Ovary (tissue), 10 donors: ENCODE measurements at regions of chr1 and their contacts with region 1.

Region 1: GRCh38 chr1:229617351-229618098 is 8.4 kb downstream of the TAF5L start:
- DNase-seq: no peak
- H3K4me3 ChIP-seq: no peak overlapping the region
- H3K27ac ChIP-seq: no peak overlapping the region
- H3K4me1 ChIP-seq: no peaks in the 10 kb centered on the region
- H3K27me3 ChIP-seq: no peaks in the 10 kb centered on the region
- CTCF ChIP-seq: no peak
- EP300 ChIP-seq: no peak
- POLR2A ChIP-seq: no peak

Region 2: GRCh38 chr1:229318056-229318455 is 299.5 kb before region 1 on chr1:
- intact Hi-C with region 1: no loop called
- DNase-seq: no peak
- H3K4me3 ChIP-seq: no peak overlapping the region
- H3K27ac ChIP-seq: no peak overlapping the region
- H3K4me1 ChIP-seq: no peaks in the 10 kb centered on the region
- H3K27me3 ChIP-seq: no peaks in the 10 kb centered on the region
- CTCF ChIP-seq: no peak
- EP300 ChIP-seq: no peak
- POLR2A ChIP-seq: no peak

Region 3: DNA sequence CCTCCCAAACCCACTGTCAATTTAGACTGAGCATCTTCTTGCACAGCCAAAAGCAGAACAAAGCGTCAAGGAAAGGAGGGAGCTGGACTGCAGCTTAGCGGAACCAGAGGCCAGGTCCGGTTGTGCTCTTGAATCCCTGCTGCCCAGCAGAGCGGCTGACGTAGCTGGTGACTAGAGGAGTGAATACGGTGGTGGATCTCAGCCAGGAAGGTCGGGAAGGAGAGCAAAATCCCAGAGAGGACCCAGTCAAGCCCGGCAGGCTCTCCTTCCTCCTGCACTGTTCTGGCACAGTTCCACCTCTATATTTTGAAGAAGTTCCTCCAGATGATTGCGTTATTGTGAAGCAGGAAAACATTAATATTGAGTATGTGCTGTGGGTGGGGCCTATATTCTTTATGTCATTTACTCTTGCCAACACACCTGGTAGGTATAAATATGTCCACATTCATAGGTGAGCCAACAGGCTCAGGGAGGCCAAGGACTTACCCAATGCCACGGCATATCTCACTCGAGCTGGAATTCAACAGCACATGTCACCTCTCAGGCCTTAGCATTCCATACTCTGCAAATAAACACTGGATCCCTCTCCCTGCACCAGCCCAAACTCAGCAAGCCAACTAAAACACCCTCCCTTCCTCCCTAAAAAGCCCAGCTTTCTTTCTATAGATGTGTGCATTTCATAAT is 35.4 kb before region 1 on chr1:
- intact Hi-C with region 1: loop called in 1 of 4 experiments (anchors 1 kb)
- DNase-seq: peak; percentile 47 to 62 (median 52)
- H3K4me3 ChIP-seq: no peak overlapping the region
- H3K27ac ChIP-seq: peak overlapping the region in 1 of 2 donors; percentile 25
- H3K4me1 ChIP-seq: peaks cover 6% of the 10 kb centered on the region
- H3K27me3 ChIP-seq: no peaks in the 10 kb centered on the region
- CTCF ChIP-seq: no peak
- EP300 ChIP-seq: no peak
- POLR2A ChIP-seq: no peak

Region 4: DNA sequence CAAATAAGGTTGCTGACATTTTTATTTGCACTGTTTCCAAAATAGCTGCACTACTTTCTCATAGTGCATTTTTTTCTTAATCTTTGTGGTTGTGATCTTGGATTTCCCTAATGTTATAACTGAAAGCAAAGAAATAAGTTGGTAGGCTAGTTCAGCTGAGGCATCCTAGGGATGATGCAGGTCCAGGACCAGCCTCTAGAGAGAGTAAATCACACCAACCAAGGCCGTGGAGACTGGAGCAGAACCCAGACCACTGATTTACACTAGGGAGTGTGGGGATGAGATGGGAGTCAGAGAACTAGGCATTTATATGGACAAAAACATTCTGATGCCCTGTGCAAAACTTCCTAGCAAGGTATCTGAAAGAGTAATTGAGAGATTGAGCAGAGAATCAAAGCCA is 113.0 kb after region 1 on chr1:
- intact Hi-C with region 1: no loop called
- DNase-seq: no peak
- H3K4me3 ChIP-seq: no peak overlapping the region
- H3K27ac ChIP-seq: no peak overlapping the region
- H3K4me1 ChIP-seq: no peaks in the 10 kb centered on the region
- H3K27me3 ChIP-seq: no peaks in the 10 kb centered on the region
- CTCF ChIP-seq: no peak
- EP300 ChIP-seq: no peak
- POLR2A ChIP-seq: no peak